MCF 10A (cell line): ENCODE measurements at regions of chr2 and their contacts with region 1.

Region 1: GRCh38 chr2:23624378-23624777 is 239.4 kb downstream of the KLHL29 start:
- DNase-seq: peak; percentile 27
- H3K4me3 Mint-ChIP-seq: no peak overlapping the region
- H3K27ac Mint-ChIP-seq: no peak overlapping the region
- H3K4me1 Mint-ChIP-seq: no peaks in the 10 kb centered on the region
- H3K27me3 Mint-ChIP-seq: no peaks in the 10 kb centered on the region
- CTCF ChIP-seq: peak; percentile 42

Region 2: DNA sequence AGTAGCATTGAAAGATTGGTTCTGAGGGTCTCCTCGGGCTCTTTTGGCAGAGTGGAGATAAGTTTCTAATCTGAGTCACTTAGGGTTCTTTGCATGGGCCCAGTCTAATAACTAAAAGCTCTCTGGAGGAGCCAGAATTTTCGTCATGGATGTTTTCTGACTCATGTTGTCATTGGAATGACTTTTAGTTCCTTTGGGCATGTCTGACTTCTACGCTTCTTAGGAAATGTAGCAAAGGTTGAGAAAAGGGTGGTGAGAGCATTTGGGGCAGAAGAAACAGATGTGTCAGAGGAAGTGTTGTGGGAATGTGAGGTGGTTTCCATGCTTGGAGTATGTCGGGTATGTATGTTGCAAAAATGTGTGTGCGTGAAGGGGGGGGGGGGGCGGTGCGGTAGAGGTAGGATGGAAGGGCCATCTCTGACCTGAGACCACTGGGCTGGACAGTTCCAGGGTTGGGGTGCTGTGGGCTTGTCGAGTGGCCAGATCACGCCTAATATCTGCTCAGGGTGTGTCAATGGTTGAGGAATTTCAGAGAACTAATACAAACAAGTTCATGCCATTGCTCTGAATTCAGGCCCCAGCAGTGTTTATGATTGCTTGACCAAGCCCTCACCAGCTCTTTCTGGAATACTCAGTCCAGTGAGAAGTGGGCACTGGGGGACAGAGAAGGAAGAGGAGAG is 212.5 kb before region 1 on chr2:
- CTCF ChIA-PET with region 1: no interaction called
- POLR2A ChIA-PET with region 1: no interaction called
- intact Hi-C with region 1: no loop called
- DNase-seq: peak; percentile 91
- H3K4me3 Mint-ChIP-seq: peak overlapping the region; percentile 35
- H3K27ac Mint-ChIP-seq: peak overlapping the region; percentile 93
- H3K4me1 Mint-ChIP-seq: peaks cover 44% of the 10 kb centered on the region
- H3K27me3 Mint-ChIP-seq: no peaks in the 10 kb centered on the region
- CTCF ChIP-seq: no peak

Region 3: DNA sequence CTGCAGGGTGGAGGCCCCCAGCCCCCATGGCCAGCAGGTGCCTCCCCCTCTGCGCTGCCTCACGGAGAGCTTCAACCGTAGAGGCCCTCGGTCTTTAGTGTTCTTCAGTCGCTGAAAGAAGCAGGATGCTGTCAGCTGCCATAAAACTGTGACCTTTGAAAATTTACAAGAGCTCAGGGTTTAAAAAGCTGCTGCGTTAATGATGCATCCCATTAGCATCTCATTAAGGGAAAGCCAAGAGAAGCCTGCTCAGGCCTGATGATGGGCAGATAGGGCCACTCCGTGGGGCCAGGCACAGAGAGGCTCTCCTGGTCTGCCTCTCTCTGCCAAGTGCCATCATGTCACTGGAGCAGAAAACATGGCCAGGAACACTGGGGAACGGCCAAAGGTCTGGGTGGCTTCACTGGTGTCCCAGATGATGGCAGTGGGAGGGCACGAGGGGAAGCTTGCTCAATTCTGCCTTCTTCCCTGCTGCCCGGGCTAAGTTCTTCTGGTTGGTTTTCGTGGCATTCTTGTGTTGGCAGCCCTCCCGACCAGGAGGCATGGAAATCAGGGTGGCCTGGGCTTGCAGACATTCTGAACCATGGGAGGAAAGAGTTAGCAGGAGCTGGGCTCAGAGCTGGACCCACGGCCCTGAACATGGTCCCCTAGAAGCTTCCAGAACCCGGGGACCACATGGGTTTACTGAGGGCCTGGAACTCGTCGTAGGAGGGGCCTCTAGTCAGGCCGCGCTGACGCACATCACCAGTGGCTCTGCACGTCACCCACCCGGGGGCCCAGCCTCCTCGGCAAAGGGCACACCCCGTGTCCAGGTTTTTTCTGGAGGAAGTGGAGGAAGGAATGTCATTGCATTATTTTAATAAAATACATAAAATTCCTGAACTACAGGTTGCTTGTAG is 11.3 kb after region 1 on chr2:
- CTCF ChIA-PET with region 1: interaction called, 6 read pairs
- POLR2A ChIA-PET with region 1: no interaction called
- intact Hi-C with region 1: loop called (anchors 1 kb)
- DNase-seq: no peak
- H3K4me3 Mint-ChIP-seq: no peak overlapping the region
- H3K27ac Mint-ChIP-seq: no peak overlapping the region
- H3K4me1 Mint-ChIP-seq: no peaks in the 10 kb centered on the region
- H3K27me3 Mint-ChIP-seq: no peaks in the 10 kb centered on the region
- CTCF ChIP-seq: no peak

Region 4: DNA sequence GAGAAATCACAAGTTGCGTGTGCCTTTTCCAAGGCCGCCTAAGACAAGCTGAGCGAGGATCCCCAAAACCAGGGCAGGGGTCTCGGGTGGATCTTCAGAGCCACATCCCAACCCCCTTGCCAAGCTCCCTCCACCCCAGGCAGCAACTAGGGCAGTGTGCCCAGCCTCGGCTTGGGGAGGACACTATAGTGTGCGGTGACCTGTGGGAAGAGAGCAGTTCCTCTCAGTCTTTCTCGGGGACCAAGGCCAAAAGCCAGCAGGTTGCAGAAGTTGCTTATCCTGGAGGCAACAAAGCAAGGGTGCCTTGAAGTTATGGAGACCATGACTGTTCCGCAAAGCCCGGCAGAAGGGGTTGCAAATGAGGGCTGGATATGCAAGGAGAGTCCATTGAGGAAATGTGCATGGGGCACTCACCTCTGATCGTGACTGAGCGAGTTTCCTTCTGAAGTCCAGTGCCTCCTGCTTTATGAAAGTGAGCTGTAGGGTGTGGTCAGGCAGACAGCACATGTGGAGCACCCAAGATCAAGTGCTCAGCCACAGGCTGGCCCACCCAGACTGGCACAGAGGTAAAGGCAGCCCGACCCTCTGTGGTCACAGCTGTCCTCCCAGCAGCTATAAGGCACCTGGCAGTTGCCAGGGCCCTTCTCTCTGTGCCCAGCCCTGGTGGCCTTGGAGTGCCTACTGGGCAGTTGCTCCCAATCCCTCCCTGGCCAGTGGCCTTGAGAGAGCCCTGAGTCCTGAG is 42.0 kb after region 1 on chr2:
- CTCF ChIA-PET with region 1: interaction called, 11 read pairs
- POLR2A ChIA-PET with region 1: no interaction called
- intact Hi-C with region 1: no loop called
- DNase-seq: no peak
- H3K4me3 Mint-ChIP-seq: no peak overlapping the region
- H3K27ac Mint-ChIP-seq: no peak overlapping the region
- H3K4me1 Mint-ChIP-seq: peaks cover 14% of the 10 kb centered on the region
- H3K27me3 Mint-ChIP-seq: no peaks in the 10 kb centered on the region
- CTCF ChIP-seq: no peak